ENCODE measurements at regions of chr2 and their contacts with region 1.

Region 1: DNA sequence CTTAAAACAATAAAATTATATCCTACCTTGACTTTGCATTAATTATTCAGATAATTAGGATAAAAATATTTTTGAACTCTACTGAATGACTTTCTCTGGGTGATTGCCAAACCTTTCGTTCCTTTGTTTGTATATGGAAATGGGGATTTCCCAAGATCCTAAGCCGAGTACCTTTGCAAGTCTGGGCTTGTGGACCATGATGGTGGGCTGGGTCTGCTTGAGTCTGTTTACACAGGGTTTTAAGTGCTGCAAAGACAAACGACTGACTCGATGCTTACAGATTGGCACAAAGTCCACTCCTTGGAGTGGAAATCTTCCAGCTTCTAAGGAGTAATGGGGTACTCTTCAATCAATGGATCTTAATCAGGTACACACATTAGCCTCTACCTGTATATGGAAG is 659.5 kb downstream of the TSN start:
- DNase-seq: peak; percentile 55 to 73
- H3K4me3 ChIP-seq: no peak overlapping the region
- H3K4me3 Mint-ChIP-seq: no peak overlapping the region
- H3K27ac Mint-ChIP-seq: no peak overlapping the region
- H3K4me1 ChIP-seq: peaks cover 11% of the 10 kb centered on the region
- H3K4me1 Mint-ChIP-seq: peaks cover 18% of the 10 kb centered on the region
- H3K27me3 ChIP-seq: no peaks in the 10 kb centered on the region
- H3K27me3 Mint-ChIP-seq: no peaks in the 10 kb centered on the region
- CTCF ChIP-seq: no peak

Region 2: GRCh38 chr2:122266636-122267035 is 148.3 kb before region 1 on chr2:
- CTCF ChIA-PET with region 1: no interaction called
- POLR2A ChIA-PET with region 1: no interaction called
- intact Hi-C with region 1: no loop called
- DNase-seq: no peak
- H3K4me3 ChIP-seq: no peak overlapping the region
- H3K4me3 Mint-ChIP-seq: no peak overlapping the region
- H3K27ac Mint-ChIP-seq: no peak overlapping the region
- H3K4me1 ChIP-seq: no peaks in the 10 kb centered on the region
- H3K4me1 Mint-ChIP-seq: no peaks in the 10 kb centered on the region
- H3K27me3 ChIP-seq: no peaks in the 10 kb centered on the region
- H3K27me3 Mint-ChIP-seq: peaks cover 12% of the 10 kb centered on the region
- CTCF ChIP-seq: no peak

Region 3: GRCh38 chr2:122433123-122433754 is 18.3 kb after region 1 on chr2:
- CTCF ChIA-PET with region 1: no interaction called
- POLR2A ChIA-PET with region 1: no interaction called
- intact Hi-C with region 1: loop called (anchors 1 kb)
- DNase-seq: peak; percentile 69 to 86
- H3K4me3 ChIP-seq: no peak overlapping the region
- H3K4me3 Mint-ChIP-seq: peak overlapping the region; percentile 28
- H3K27ac Mint-ChIP-seq: peak overlapping the region; percentile 66
- H3K4me1 ChIP-seq: peaks cover 24% of the 10 kb centered on the region
- H3K4me1 Mint-ChIP-seq: peaks cover 21% of the 10 kb centered on the region
- H3K27me3 ChIP-seq: no peaks in the 10 kb centered on the region
- H3K27me3 Mint-ChIP-seq: no peaks in the 10 kb centered on the region
- CTCF ChIP-seq: no peak

Region 4: DNA sequence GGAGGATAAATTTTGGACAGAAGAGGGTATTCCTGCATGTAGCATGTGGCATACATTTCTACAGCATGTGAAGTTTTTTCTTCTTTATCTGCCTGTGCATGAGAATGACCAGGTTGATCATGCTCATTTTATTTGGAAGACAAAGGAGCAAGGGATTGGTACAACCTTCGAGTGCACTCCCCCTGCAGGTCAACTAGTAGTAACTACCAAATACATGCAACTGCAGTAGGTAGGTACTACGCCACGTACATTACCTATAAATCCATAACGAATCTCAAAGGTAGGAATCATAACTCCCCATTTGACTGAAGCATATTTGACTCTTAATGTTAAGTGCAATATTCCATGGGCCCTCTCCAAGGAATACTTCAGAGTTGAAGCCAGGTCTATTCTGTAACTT is 104.5 kb after region 1 on chr2:
- CTCF ChIA-PET with region 1: no interaction called
- POLR2A ChIA-PET with region 1: no interaction called
- intact Hi-C with region 1: loop called (anchors 10 kb)
- DNase-seq: no peak
- H3K4me3 ChIP-seq: no peak overlapping the region
- H3K4me3 Mint-ChIP-seq: no peak overlapping the region
- H3K27ac Mint-ChIP-seq: no peak overlapping the region
- H3K4me1 ChIP-seq: peaks cover 14% of the 10 kb centered on the region
- H3K4me1 Mint-ChIP-seq: no peaks in the 10 kb centered on the region
- H3K27me3 ChIP-seq: no peaks in the 10 kb centered on the region
- H3K27me3 Mint-ChIP-seq: no peaks in the 10 kb centered on the region
- CTCF ChIP-seq: peak in 1 of 2 experiments; percentile 16